Activated CD4-positive, alpha-beta T cell treated with anti-CD3 and anti-CD28 coated beads for 36 hours (primary cell): ENCODE measurements at regions of chr14 and their contacts with region 1.

Region 1: GRCh38 chr14:50128225-50128624 is 11.9 kb upstream of the VCPKMT start:
- DNase-seq: no peak
- ATAC-seq: no peak
- H3K4me3 Mint-ChIP-seq: no peak overlapping the region
- H3K27ac Mint-ChIP-seq: no peak overlapping the region
- H3K4me1 Mint-ChIP-seq: peaks cover 2% of the 10 kb centered on the region
- H3K27me3 Mint-ChIP-seq: no peaks in the 10 kb centered on the region

Region 2: DNA sequence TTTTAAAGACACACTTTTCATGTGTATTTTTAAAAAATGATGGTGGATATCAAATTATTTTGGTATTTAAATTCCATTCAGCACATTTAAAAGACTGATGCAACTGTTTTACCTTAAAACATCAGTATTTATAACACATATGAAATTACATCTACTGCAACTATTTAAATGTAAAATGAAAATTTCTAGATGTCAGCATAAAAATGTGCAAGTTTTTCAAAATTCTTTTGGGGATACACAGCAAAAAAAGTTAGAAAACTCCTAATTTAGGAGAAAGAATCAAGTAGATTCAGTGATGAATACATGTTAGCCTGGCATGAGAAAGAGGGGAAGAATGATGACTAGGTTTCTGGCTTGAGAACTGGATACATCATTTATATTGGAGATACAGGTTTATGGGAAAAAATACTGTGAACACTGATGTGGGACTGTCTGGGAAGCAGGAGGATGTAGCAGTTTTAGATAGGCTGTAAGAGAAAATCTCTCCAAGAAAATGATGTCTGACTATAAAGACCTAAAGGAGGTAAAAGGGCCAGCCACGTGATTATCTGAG is 93.9 kb after region 1 on chr14:
- CTCF ChIA-PET with region 1: interaction called, 3 read pairs
- POLR2A ChIA-PET with region 1: no interaction called
- intact Hi-C with region 1: loop called in 1 of 2 experiments (anchors 5 kb)
- DNase-seq: no peak
- ATAC-seq: no peak
- H3K4me3 Mint-ChIP-seq: no peak overlapping the region
- H3K27ac Mint-ChIP-seq: peak overlapping the region; percentile 5
- H3K4me1 Mint-ChIP-seq: peaks cover 39% of the 10 kb centered on the region
- H3K27me3 Mint-ChIP-seq: no peaks in the 10 kb centered on the region